ENCODE measurements at regions of chr10 and their contacts with region 1.

Region 1: GRCh38 chr10:70549962-70550458 is 52.5 kb downstream of the PRF1 start:
- DNase-seq: peak; percentile 24
- H3K4me3 ChIP-seq: no peak overlapping the region
- H3K27ac ChIP-seq: no peak overlapping the region
- H3K27me3 ChIP-seq: peaks cover 2% of the 10 kb centered on the region
- CTCF ChIP-seq: peak; percentile 90

Region 2: GRCh38 chr10:70404036-70404786 is 145.8 kb before region 1 on chr10 and contains the start of gene EIF4EBP2:
- CTCF ChIA-PET with region 1: no interaction called
- POLR2A ChIA-PET with region 1: no interaction called
- DNase-seq: peak; percentile 84
- H3K4me3 ChIP-seq: peak within 1 kb of the TSS; percentile 91
- H3K27ac ChIP-seq: peak within 1 kb of the TSS; percentile 82
- H3K27me3 ChIP-seq: no peaks in the 10 kb centered on the region
- CTCF ChIP-seq: no peak
- polyA plus RNA-seq, gene EIF4EBP2: 27.3 and 31.2 TPM in 2 replicates

Region 3: DNA sequence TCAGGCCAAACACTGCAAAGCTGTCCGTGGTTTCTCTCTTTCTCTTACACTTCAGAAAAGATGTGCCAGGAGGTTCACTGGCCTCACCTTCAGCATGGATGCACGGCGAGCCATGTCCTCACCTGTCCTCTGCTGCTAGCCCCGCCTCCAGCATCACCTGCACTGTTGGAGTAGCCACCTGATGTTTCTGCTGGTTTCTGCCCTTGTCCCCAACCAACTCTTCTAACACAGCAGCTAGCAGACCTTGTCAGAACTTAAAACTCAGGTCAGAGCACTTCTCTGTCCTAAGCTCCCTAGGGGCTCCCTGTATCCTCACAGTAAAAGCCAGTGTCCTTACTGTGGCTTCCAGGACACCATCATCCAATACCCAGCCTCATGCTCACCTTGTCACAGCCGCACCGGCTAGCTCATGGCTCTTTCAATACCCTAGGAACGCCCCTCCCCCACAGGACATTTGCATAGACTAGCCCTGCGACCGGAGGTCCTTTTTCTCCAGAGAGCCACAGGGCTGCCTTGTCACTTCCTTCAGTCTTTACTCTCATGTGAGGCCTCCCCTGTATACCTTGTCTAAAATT is 56.3 kb before region 1 on chr10:
- CTCF ChIA-PET with region 1: no interaction called
- POLR2A ChIA-PET with region 1: interaction called, 13 read pairs
- DNase-seq: no peak
- H3K4me3 ChIP-seq: no peak overlapping the region
- H3K27ac ChIP-seq: no peak overlapping the region
- H3K27me3 ChIP-seq: peaks cover 22% of the 10 kb centered on the region
- CTCF ChIP-seq: no peak

Region 4: GRCh38 chr10:70758757-70759514 is 208.9 kb after region 1 on chr10:
- CTCF ChIA-PET with region 1: interaction called, 164 read pairs
- POLR2A ChIA-PET with region 1: no interaction called
- DNase-seq: peak; percentile 61
- H3K4me3 ChIP-seq: no peak overlapping the region
- H3K27ac ChIP-seq: no peak overlapping the region
- H3K27me3 ChIP-seq: peaks cover 18% of the 10 kb centered on the region
- CTCF ChIP-seq: peak; percentile 87

Region 5: DNA sequence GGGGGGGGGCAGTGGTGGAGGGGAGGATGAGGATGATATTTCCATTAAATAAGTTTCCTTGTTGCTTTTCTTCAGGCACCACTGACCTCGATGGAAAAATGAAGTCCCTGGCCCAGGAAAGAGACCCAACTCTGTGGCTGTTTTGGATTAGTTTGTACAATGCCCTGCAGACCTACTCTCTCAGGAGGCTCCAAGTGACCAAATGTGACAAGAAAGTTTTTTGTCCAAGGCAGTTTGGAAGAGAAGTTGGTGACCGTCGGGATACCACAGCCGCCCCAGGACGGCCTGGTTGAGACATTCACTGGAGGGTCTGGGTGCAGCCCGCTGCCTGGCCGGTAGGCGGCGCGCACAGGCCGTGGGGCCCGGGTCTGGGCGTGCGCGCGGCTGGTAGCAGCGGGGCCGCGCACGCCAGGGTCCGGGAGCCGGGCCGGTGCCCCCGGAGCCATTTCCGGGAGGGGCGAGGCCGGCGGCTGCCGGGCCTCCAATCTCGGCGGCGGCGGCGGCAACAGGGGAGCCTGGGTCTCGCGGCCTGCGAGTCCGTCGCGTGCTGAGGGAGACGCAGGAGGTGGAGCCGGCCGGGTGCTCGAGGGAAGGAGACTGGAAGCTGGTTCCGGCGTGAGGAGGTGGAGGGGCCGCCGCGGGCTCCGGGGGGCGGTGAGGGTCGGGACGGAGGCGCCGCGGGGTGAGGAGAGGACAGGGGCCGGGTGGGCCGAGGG is 265.7 kb after region 1 on chr10 and contains the start of gene SGPL1:
- CTCF ChIA-PET with region 1: interaction called, 16 read pairs
- POLR2A ChIA-PET with region 1: no interaction called
- DNase-seq: peak; percentile 30
- H3K4me3 ChIP-seq: peak within 1 kb of the TSS; percentile 96
- H3K27ac ChIP-seq: peak within 1 kb of the TSS; percentile 95
- H3K27me3 ChIP-seq: peaks cover 8% of the 10 kb centered on the region
- CTCF ChIP-seq: peak; percentile 79
- polyA plus RNA-seq, gene SGPL1: 30.1 and 30.8 TPM in 2 replicates

Region 6: DNA sequence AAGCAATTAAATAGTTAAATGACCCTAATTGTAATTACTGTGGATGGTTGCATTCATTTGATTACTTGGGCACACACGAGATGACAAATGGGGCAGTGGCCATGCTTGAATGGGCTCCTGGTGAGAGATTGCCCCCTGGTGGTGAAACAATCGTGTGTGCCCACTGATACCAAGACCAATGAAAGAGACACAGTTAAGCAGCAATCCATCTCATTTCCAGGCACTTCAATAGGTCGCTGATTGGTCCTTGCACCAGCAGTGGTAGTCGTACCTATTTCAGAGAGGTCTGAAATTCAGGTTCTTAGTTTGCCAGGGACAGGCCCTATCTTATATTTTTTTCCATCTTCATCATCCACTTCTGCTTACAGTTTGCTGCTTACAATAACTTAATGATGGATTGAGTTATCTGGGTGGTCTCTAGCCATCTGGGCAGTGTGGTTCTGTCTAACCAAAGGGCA is 330.1 kb after region 1 on chr10:
- CTCF ChIA-PET with region 1: interaction called, 14 read pairs
- POLR2A ChIA-PET with region 1: no interaction called
- DNase-seq: peak; percentile 38
- H3K4me3 ChIP-seq: no peak overlapping the region
- H3K27ac ChIP-seq: no peak overlapping the region
- H3K27me3 ChIP-seq: no peaks in the 10 kb centered on the region
- CTCF ChIP-seq: peak; percentile 96